Activated naive CD4-positive, alpha-beta T cell treated with anti-CD3 and anti-CD28 coated beads for 36 hours (primary cell): ENCODE measurements at regions of chr4 and their contacts with region 1.

Region 1: GRCh38 chr4:168923526-168924194 is 86.4 kb downstream of the CBR4 start:
- DNase-seq: peak; percentile 73
- H3K4me3 Mint-ChIP-seq: no peak overlapping the region
- H3K27ac Mint-ChIP-seq: no peak overlapping the region
- H3K4me1 Mint-ChIP-seq: peaks cover 2% of the 10 kb centered on the region
- H3K27me3 Mint-ChIP-seq: no peaks in the 10 kb centered on the region

Region 2: DNA sequence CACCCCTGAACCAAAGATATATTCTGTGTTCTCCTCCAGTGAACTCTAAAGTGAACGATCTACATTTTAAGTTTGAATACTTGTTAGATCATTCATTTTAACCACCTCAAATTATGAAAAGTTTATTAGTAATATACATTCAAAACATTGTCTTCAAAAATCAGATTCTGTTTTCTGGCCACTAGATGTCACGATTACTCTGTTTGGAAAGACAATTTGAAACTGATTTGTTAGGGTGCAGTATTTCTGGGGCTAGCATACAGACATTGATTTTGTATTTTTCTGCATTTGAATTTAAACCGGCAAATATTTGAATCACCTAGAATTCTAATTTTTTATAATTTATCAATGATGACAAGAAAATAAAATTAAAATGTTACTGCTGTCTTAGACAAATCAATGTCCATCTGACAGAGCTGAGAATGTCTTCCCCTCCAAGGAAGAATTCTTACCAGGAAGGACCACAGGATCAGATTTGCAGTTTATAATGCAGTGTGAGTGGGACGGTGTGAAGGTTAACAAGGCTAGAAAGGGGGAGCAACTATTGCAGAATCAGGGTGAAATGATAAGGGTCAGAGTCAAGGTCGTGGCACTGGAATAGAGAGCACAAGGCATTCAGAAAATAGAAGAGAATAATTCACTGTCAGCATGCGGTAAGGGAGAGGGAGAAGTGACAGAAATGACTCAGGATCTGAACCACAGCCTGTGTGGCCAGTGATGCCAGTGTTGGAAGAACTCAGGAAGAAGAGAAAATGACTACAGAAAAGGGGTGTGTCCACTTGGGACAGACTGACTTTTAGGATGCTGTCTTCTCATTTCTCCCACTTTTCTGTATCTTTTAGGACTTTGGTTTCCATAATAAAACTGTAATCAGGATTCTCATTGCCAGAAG is 739.7 kb before region 1 on chr4:
- CTCF ChIA-PET with region 1: interaction called, 4 read pairs
- intact Hi-C with region 1: loop called (anchors 1 kb)
- DNase-seq: no peak
- H3K4me3 Mint-ChIP-seq: no peak overlapping the region
- H3K27ac Mint-ChIP-seq: no peak overlapping the region
- H3K4me1 Mint-ChIP-seq: no peaks in the 10 kb centered on the region
- H3K27me3 Mint-ChIP-seq: no peaks in the 10 kb centered on the region

Region 3: DNA sequence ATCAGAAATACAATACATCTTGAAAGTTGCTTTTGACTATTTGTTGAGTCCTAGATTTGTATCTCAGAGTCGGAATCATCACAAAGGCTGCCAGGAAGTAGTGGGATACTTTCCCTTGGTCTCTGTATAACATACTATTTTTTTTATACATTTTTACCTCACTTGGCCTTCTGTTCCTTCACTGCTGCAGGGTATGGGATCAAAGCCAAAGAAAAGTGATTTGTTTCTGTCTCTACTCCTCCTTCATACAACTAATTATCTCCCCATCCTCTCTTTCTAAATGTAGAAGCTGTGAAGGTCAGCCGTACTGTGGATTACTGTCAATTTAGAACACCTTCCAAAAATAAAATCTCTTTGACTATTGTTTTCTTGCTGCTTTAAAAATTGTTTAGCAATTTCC is 401.9 kb before region 1 on chr4:
- CTCF ChIA-PET with region 1: no interaction called
- intact Hi-C with region 1: no loop called
- DNase-seq: no peak
- H3K4me3 Mint-ChIP-seq: no peak overlapping the region
- H3K27ac Mint-ChIP-seq: no peak overlapping the region
- H3K4me1 Mint-ChIP-seq: no peaks in the 10 kb centered on the region
- H3K27me3 Mint-ChIP-seq: peaks cover 2% of the 10 kb centered on the region

Region 4: GRCh38 chr4:168908093-168908492 is 15.6 kb before region 1 on chr4:
- CTCF ChIA-PET with region 1: interaction called, 28 read pairs
- intact Hi-C with region 1: no loop called
- DNase-seq: no peak
- H3K4me3 Mint-ChIP-seq: no peak overlapping the region
- H3K27ac Mint-ChIP-seq: no peak overlapping the region
- H3K4me1 Mint-ChIP-seq: no peaks in the 10 kb centered on the region
- H3K27me3 Mint-ChIP-seq: no peaks in the 10 kb centered on the region

Region 5: DNA sequence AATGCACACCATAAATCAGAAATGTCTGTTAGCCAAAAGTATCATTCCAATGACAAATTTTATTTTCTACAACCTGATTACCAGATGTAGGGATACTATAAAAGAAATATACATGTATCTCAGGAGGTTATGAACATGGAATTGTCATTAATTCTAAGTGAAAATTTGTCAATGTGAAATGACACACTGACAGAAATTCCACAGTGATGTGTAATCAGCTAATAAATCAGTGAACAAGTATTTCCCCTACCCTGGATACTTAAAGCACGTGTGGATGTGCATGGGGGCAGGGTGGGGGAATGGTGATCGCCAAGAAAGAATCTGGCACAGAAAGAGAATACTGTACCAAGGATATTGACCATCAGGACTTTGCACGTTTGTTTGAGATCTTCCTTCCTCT is 223.5 kb after region 1 on chr4:
- CTCF ChIA-PET with region 1: no interaction called
- intact Hi-C with region 1: no loop called
- DNase-seq: no peak
- H3K4me3 Mint-ChIP-seq: no peak overlapping the region
- H3K27ac Mint-ChIP-seq: no peak overlapping the region
- H3K4me1 Mint-ChIP-seq: no peaks in the 10 kb centered on the region
- H3K27me3 Mint-ChIP-seq: no peaks in the 10 kb centered on the region

Region 6: GRCh38 chr4:169270810-169271691 is 347.4 kb after region 1 on chr4 and contains the start of gene SH3RF1:
- CTCF ChIA-PET with region 1: no interaction called
- intact Hi-C with region 1: loop called (anchors 5 kb)
- DNase-seq: peak; percentile 49
- H3K4me3 Mint-ChIP-seq: peak within 1 kb of the TSS; percentile 77
- H3K27ac Mint-ChIP-seq: no peak within 1 kb of the TSS
- H3K4me1 Mint-ChIP-seq: peaks cover 3% of the 10 kb centered on the region
- H3K27me3 Mint-ChIP-seq: peaks cover 49% of the 10 kb centered on the region
- total RNA-seq, gene SH3RF1: 0.22 to 0.55 TPM

Region 7: DNA sequence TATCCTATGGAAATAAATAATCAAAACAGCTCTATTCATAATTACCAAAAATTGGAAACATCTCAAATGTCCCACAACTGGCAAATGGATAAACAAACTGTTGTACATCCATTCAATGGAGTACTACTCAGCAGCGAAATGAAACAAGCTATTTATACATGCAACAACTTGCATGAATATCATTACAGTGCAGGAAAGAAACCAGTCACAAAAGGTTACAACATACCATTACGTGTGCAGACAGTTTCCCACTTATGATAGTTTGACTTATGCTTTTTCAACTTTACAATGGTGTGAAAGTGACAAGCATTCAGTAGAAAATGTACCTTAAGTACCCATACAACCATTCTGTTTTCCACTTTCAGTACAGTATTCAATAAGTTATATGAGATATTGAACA is 606.4 kb after region 1 on chr4:
- CTCF ChIA-PET with region 1: no interaction called
- intact Hi-C with region 1: no loop called
- DNase-seq: no peak
- H3K4me3 Mint-ChIP-seq: no peak overlapping the region
- H3K27ac Mint-ChIP-seq: no peak overlapping the region
- H3K4me1 Mint-ChIP-seq: no peaks in the 10 kb centered on the region
- H3K27me3 Mint-ChIP-seq: no peaks in the 10 kb centered on the region

Region 8: DNA sequence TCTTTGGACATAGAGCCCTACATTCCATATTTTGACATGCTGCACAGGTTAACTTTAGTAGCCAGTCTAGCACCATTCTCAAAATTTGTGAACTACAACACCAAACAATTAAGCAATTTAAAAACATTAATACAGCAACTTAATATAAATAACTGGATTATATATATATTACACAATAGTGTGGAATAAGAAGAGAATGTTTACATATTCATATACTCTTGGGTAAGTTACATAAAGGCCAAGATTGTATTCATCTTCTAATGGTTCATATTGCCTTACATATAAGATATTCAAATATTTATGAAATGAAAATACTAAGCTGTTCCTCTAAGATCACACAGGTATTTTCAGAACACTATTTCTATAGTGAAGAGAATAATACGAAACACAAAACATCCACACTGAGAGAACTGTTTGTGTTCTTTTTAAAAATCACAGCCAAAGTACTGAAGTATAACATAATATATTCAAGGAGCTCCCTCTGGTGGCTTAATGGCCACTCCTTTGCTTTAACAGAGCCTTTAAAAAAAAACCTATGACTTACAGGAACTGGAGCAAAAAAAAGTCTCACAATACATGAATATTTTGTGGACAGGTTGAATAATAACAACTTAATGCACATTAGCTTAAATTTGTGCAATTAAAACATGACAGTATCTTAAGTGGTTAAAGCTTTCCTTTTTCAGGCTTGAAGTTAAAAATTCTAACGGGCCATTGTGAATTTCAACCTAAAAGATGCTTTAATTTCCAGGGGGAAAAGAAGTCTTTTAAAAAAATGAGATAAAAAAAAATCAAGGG is 642.6 kb after region 1 on chr4:
- CTCF ChIA-PET with region 1: interaction called, 16 read pairs
- intact Hi-C with region 1: loop called (anchors 1 kb)
- DNase-seq: peak; percentile 47
- H3K4me3 Mint-ChIP-seq: no peak overlapping the region
- H3K27ac Mint-ChIP-seq: no peak overlapping the region
- H3K4me1 Mint-ChIP-seq: peaks cover 7% of the 10 kb centered on the region
- H3K27me3 Mint-ChIP-seq: no peaks in the 10 kb centered on the region

Region 9: GRCh38 chr4:170047771-170048354 is 1124.2 kb after region 1 on chr4:
- CTCF ChIA-PET with region 1: no interaction called
- intact Hi-C with region 1: loop called (anchors 5 kb)
- DNase-seq: peak; percentile 75
- H3K4me3 Mint-ChIP-seq: no peak overlapping the region
- H3K27ac Mint-ChIP-seq: no peak overlapping the region
- H3K4me1 Mint-ChIP-seq: no peaks in the 10 kb centered on the region
- H3K27me3 Mint-ChIP-seq: no peaks in the 10 kb centered on the region